HEK293 (cell line): ENCODE measurements at regions of chr5 and their contacts with region 1.

Region 1: DNA sequence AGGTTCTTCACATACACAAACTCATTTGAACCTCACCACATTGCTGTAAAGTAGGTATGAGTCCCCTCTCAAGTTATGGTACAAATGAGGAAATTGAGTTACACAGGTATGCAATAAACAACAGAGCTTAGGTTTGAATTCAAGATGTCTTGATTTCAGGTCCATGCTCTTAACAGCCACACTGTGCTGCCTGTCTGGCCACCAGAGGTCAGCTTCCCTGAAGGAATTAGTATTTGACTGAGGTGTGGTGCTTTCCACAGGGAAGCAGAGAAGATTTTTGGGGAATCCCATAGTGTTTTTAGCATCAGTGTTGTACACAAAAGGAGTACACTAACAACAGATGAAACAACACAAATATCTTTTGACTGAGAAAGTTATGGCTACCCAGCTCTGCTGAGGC is 94.4 kb upstream of the ITGA1 start:
- H3K4me3 ChIP-seq: no peak overlapping the region
- H3K27ac ChIP-seq: no peak overlapping the region
- H3K4me1 ChIP-seq: no peaks in the 10 kb centered on the region
- CTCF ChIP-seq: peak; percentile 21; the same call in 1 of the 2 replicates

Region 2: GRCh38 chr5:52915176-52915875 is 222.0 kb after region 1 on chr5:
- CTCF ChIA-PET with region 1: interaction called, 13 read pairs
- POLR2A ChIA-PET with region 1: no interaction called
- H3K4me3 ChIP-seq: peak overlapping the region; percentile 32
- H3K27ac ChIP-seq: no peak overlapping the region
- H3K4me1 ChIP-seq: no peaks in the 10 kb centered on the region
- CTCF ChIP-seq: peak; percentile 70